Activated naive CD4-positive, alpha-beta T cell treated with anti-CD3 and anti-CD28 coated beads for 36 hours (primary cell): ENCODE measurements at regions of chr16 and their contacts with region 1.

Region 1: GRCh38 chr16:74606521-74607310 is at the start of gene GLG1:
- DNase-seq: peak; percentile 92
- H3K4me3 Mint-ChIP-seq: peak within 1 kb of the TSS; percentile 99
- H3K27ac Mint-ChIP-seq: peak within 1 kb of the TSS; percentile 86
- H3K4me1 Mint-ChIP-seq: peaks cover 53% of the 10 kb centered on the region
- H3K27me3 Mint-ChIP-seq: no peaks in the 10 kb centered on the region
- total RNA-seq, gene GLG1: 60.8 to 62.0 TPM

Region 2: DNA sequence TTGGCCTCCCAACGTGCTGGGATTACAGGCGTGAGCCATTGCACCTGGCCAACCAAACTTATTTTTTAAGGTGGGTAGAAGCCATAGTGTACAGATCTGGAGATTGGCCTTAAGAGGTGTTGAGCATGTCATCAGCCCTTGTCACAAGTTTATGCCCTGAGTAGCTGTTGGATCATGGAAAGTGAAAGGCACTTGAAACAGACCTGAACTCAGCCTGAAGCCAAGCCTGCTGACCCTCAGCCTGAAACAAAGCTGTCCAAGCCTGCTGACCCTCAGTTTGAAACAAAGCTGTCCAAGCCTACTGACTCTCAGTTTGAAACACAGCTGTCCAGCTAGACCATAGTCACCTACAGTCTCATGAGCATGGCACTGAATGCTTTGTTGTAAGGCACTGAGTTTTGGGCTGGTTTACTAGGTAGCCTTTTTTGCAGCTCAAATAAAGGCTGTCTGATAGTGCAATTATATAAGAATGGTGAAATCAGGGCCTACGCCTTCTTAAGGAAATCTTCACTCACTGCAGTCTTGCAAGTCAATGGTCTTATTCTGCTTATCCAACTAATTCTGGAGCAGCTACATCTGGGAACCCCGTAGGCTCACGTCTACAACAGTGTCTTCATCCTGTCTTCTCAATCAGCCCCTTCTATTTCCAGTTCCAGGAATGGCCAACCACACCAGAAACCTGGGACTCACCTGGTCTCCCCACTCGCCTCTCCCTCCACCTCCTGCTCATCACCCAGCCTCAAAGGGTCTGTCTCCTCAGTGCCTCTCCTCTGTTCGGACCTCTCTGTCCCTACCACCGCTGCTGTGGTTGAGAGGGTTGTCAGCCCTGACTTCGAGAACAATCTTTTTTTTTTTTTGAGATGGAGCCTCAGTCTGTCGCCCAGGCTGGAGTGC is 233.5 kb before region 1 on chr16:
- CTCF ChIA-PET with region 1: no interaction called
- intact Hi-C with region 1: loop called (anchors 1 kb)
- DNase-seq: no peak
- H3K4me3 Mint-ChIP-seq: no peak overlapping the region
- H3K27ac Mint-ChIP-seq: no peak overlapping the region
- H3K4me1 Mint-ChIP-seq: peaks cover 2% of the 10 kb centered on the region
- H3K27me3 Mint-ChIP-seq: no peaks in the 10 kb centered on the region

Region 3: DNA sequence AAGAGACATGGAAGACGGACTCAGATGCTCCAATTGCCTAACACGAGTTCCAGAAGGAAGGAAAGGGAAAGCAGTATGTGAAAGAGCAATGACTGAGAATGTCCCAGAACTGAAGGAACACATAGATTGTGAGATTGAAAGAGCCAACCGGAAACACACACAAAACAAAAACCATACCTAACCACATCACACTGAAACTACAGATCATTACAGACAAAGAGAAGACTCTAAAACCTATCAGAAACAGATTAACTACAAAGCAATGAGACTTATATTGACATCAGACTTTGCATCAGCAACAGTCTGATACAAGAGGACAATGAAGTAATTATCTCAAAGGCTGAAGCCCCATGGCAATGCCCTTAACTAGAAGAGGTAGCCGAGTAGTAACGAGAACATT is 139.8 kb before region 1 on chr16:
- CTCF ChIA-PET with region 1: no interaction called
- intact Hi-C with region 1: loop called (anchors 2 kb)
- DNase-seq: no peak
- H3K4me3 Mint-ChIP-seq: no peak overlapping the region
- H3K27ac Mint-ChIP-seq: no peak overlapping the region
- H3K4me1 Mint-ChIP-seq: peaks cover 17% of the 10 kb centered on the region
- H3K27me3 Mint-ChIP-seq: no peaks in the 10 kb centered on the region

Region 4: DNA sequence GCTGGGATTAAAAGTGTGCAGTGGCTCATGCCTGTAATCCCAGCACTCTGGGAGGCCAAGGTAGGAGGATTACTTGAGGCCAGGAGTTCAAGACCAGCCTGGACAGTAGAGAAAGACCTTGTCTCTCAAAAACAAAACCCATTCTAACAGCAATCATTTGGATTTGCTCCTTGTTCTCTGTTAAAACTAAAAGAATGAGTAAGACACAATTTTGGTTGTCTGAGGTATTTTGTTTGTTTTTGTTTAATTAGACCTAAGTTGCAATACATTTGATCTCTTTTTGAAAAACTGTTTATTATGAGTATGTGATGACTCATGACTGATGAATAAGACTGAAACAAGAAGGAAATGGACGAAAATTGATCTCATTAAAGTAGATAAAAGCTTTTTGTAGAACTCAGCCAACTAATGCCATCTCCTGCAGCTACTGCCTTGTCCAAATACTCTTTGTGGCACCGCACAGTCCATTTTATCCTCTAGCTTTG is 28.8 kb before region 1 on chr16:
- CTCF ChIA-PET with region 1: no interaction called
- intact Hi-C with region 1: loop called (anchors 1 kb)
- DNase-seq: no peak
- H3K4me3 Mint-ChIP-seq: no peak overlapping the region
- H3K27ac Mint-ChIP-seq: peak overlapping the region; percentile 10
- H3K4me1 Mint-ChIP-seq: peaks cover 62% of the 10 kb centered on the region
- H3K27me3 Mint-ChIP-seq: no peaks in the 10 kb centered on the region

Region 5: DNA sequence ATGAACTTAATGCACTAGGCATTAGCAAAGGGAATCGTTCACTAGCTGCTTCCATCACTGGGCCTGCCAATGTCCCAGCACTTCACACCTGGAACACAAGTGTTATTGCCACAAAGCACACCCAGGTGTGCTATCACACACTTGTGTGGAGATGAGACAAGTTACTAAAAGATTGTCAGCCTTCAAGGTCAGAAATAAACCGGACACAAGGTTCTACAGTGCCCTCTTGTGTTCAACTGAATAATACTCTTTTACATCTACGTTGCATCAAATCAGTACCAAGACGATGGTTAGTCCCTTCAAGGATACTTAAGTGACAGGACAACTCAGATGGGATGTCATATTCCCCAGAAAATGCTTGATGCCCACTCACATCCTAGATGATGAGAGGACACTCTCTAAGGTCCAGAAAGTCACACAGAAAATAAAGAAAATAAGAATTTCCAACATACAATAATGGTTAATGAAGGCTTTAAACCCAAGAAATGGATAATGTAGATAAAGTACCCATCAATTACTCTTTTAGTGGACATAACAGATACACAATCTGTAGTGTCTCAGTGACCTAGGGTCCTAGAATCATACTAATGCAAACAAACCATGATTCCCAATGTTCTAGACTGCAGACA is 16.6 kb after region 1 on chr16:
- CTCF ChIA-PET with region 1: interaction called, 4 read pairs
- intact Hi-C with region 1: loop called (anchors 1 kb)
- DNase-seq: no peak
- H3K4me3 Mint-ChIP-seq: no peak overlapping the region
- H3K27ac Mint-ChIP-seq: peak overlapping the region; percentile 47
- H3K4me1 Mint-ChIP-seq: peaks cover 38% of the 10 kb centered on the region
- H3K27me3 Mint-ChIP-seq: no peaks in the 10 kb centered on the region

Region 6: GRCh38 chr16:74666425-74667254 is 59.9 kb after region 1 on chr16 and contains the start of gene RFWD3:
- CTCF ChIA-PET with region 1: no interaction called
- intact Hi-C with region 1: loop called (anchors 1 kb)
- DNase-seq: peak; percentile 98
- H3K4me3 Mint-ChIP-seq: peak within 1 kb of the TSS; percentile 89
- H3K27ac Mint-ChIP-seq: peak within 1 kb of the TSS; percentile 88
- H3K4me1 Mint-ChIP-seq: peaks cover 39% of the 10 kb centered on the region
- H3K27me3 Mint-ChIP-seq: no peaks in the 10 kb centered on the region
- total RNA-seq, gene RFWD3: 114 to 124 TPM

Region 7: GRCh38 chr16:74734361-74735161 is 127.8 kb after region 1 on chr16:
- CTCF ChIA-PET with region 1: no interaction called
- intact Hi-C with region 1: no loop called
- DNase-seq: no peak
- H3K4me3 Mint-ChIP-seq: no peak overlapping the region
- H3K27ac Mint-ChIP-seq: no peak overlapping the region
- H3K4me1 Mint-ChIP-seq: peaks cover 7% of the 10 kb centered on the region
- H3K27me3 Mint-ChIP-seq: no peaks in the 10 kb centered on the region